Activated T-helper 1 cell treated with anti-CD3 and anti-CD28 coated beads, Interleukin-12 subunit alpha, Interleukin-12 subunit beta, Interleukin-2, Interleukin-4 antibody, amounts not matched to agents 30 ng/mL and 10 ng/mL and 1 ng/mL, durations not matched to agents 14 hours and 24 hours and 36 hours (primary cell): ENCODE measurements at regions of chr17 and their contacts with region 1.

Region 1: GRCh38 chr17:21284319-21285163 is at the start of gene MAP2K3:
- DNase-seq: peak; percentile 97
- H3K4me3 Mint-ChIP-seq: peak within 1 kb of the TSS; percentile 100
- H3K27ac Mint-ChIP-seq: peak within 1 kb of the TSS; percentile 96
- H3K4me1 Mint-ChIP-seq: peaks cover 37% of the 10 kb centered on the region
- H3K27me3 Mint-ChIP-seq: peaks cover 5% of the 10 kb centered on the region
- total RNA-seq, gene MAP2K3: 177 and 185 TPM in 2 replicates

Region 2: GRCh38 chr17:21098934-21099689 is 185.4 kb before region 1 on chr17:
- intact Hi-C with region 1: loop called (anchors 1 kb)
- DNase-seq: peak; percentile 68
- H3K4me3 Mint-ChIP-seq: peak overlapping the region; percentile 92
- H3K27ac Mint-ChIP-seq: peak overlapping the region; percentile 88
- H3K4me1 Mint-ChIP-seq: peaks cover 27% of the 10 kb centered on the region
- H3K27me3 Mint-ChIP-seq: no peaks in the 10 kb centered on the region

Region 3: DNA sequence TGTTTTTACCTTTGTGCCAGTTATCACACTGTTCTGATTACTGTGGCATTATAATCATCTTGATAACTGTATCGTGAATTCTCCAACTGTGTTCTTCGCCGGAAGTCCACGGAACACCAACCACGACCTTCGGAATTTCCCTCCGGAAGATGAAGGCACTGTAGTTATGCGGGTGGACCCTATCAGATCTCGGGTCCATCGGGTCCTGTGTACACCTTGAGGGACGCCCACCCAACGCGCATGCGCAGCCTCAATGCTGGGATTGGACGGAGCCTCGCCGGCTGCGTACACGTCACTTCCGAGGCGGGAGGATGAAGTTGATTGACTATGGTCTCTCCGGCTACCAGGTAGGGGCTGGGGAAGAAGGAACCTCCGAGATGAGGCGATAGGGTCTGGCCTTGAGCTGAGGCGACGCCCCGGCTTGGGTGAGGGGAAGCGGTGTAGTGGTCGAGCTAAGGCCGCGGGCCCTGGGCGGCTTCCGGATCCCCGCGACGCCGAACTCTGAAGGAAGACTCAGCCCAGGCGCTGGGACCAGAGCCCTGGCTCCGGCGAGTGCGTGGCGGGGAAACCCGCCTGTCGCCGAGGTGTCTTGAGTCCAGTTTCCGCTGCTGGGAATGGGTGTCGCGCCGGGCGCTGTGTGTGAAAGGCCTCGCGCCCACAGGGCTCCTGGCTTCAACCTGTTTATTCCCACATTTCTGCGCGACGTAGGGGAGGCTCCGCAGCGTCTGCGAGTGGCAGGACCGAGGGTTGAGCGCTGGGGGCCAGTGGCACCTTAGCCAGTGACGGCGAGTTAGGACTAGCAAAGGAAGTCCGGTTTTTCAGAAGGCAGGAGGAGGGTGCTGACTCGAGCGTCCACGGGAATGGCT is 157.7 kb before region 1 on chr17 and contains the start of gene DHRS7B:
- intact Hi-C with region 1: loop called (anchors 1 kb)
- DNase-seq: peak; percentile 96
- H3K4me3 Mint-ChIP-seq: peak within 1 kb of the TSS; percentile 95
- H3K27ac Mint-ChIP-seq: peak within 1 kb of the TSS; percentile 95
- H3K4me1 Mint-ChIP-seq: peaks cover 44% of the 10 kb centered on the region
- H3K27me3 Mint-ChIP-seq: peaks cover 3% of the 10 kb centered on the region
- total RNA-seq, gene DHRS7B: 20.0 and 23.6 TPM in 2 replicates

Region 4: DNA sequence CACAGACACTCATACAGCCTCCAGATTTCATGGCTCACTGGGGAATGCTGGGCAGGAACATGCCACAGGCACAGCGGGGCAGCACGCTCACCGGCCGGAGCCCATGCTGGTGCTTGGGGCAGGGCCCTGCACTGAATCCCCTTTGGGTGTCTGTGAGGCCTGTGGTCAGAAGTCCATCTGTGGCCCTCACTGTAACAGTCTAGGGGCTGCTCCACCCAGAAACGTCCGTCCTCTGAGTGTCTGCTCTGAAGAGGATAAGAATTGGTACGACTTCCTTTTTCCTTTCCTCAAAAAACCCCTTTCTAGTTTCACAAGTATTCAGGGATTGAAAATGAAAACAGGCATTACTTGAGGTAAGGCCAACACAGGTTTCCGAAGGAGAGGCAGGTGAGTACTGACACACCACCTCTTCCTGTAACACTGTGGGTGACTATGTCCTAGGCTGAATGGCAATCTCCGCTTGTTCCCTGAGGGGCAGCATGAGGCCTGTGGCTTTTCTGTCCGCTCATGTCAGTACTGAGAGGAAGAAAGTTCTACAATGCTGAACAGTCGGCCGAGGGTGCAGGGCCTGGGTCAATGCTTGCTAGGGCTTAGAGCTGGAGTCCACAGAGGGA is 113.1 kb before region 1 on chr17:
- intact Hi-C with region 1: no loop called
- DNase-seq: no peak
- H3K4me3 Mint-ChIP-seq: no peak overlapping the region
- H3K27ac Mint-ChIP-seq: peak overlapping the region; percentile 62
- H3K4me1 Mint-ChIP-seq: peaks cover 19% of the 10 kb centered on the region
- H3K27me3 Mint-ChIP-seq: no peaks in the 10 kb centered on the region

Region 5: DNA sequence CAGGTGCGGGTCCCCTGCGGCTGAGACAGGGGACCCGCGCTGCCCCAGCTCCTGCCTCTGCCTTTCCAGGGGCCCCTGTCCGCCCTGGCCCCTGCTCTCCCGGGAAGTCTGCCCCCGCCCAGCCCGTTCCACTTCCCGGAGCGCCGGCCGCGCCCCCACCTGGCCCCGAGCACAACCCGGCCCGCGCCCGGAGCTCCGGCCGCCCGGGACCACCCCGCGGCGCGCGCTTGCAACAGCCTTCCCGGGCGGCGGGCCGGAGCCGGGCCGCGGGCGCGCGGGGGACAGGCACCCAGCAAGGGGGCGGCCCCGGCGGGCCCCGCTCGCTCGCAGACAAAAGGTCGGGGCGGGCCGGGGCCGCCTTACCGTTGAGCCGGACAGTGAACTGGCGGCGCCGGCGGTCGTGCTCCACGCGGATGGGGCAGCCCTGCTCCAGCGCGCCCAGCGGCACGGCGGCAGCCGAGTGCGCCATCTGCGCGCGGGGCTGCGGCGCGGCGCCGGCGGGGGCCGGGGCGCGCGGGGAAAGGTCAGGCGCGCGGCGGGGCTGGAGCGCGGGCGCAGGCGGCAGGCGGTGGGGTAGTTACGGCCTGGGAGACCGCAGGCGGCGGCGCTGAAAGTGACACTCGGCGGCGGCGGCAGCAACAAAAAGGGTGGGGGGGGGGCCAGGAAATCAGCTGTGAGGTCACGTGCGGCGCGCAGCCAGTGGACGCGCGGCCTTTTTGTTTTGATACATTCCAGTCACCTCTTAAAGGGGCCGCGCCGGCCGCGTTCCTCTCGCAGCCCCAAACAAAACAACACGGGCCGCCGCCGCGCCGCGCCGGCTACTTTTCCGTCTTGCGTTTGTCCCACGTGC is 31.5 kb before region 1 on chr17 and contains the start of gene NATD1:
- intact Hi-C with region 1: loop called (anchors 1 kb)
- DNase-seq: peak; percentile 70
- H3K4me3 Mint-ChIP-seq: peak within 1 kb of the TSS; percentile 83
- H3K27ac Mint-ChIP-seq: peak within 1 kb of the TSS; percentile 23
- H3K4me1 Mint-ChIP-seq: peaks cover 7% of the 10 kb centered on the region
- H3K27me3 Mint-ChIP-seq: peaks cover 13% of the 10 kb centered on the region
- total RNA-seq, gene NATD1: 1.6 and 1.7 TPM in 2 replicates

Region 6: GRCh38 chr17:21457051-21458026 is 172.8 kb after region 1 on chr17:
- intact Hi-C with region 1: loop called (anchors 2 kb)
- DNase-seq: peak; percentile 85
- H3K4me3 Mint-ChIP-seq: no peak overlapping the region
- H3K27ac Mint-ChIP-seq: peak overlapping the region; percentile 64
- H3K4me1 Mint-ChIP-seq: peaks cover 10% of the 10 kb centered on the region
- H3K27me3 Mint-ChIP-seq: peaks cover 25% of the 10 kb centered on the region